Mammary epithelial cell (primary cell): ENCODE measurements at regions of chr6 and their contacts with region 1.

Region 1: GRCh38 chr6:44284121-44284520 is 13.9 kb downstream of the TMEM151B start:
- DNase-seq: no peak
- H3K4me3 ChIP-seq: no peak overlapping the region
- H3K27ac ChIP-seq: no peak overlapping the region
- H3K4me1 ChIP-seq: no peaks in the 10 kb centered on the region
- H3K27me3 ChIP-seq: no peaks in the 10 kb centered on the region
- CTCF ChIP-seq: no peak

Region 2: GRCh38 chr6:44332585-44332984 is 48.5 kb after region 1 on chr6:
- CTCF ChIA-PET with region 1: no interaction called
- dilution Hi-C with region 1: no loop called
- in situ Hi-C with region 1: loop called in 1 of 2 experiments (anchors 5 kb)
- intact Hi-C with region 1: no loop called
- DNase-seq: no peak
- H3K4me3 ChIP-seq: no peak overlapping the region
- H3K27ac ChIP-seq: no peak overlapping the region
- H3K4me1 ChIP-seq: no peaks in the 10 kb centered on the region
- H3K27me3 ChIP-seq: peaks cover 1% of the 10 kb centered on the region
- CTCF ChIP-seq: no peak